Psoas muscle (tissue), 8 donors: ENCODE measurements at regions of chr3 and their contacts with region 1.

Region 1: GRCh38 chr3:9809615-9810432 is at the start of gene TTLL3:
- DNase-seq: peak; percentile 85 to 87
- ATAC-seq: peak; percentile 77 to 86 (median 84)
- H3K4me3 ChIP-seq: peak within 1 kb of the TSS; percentile 87
- H3K27ac ChIP-seq: peak within 1 kb of the TSS; percentile 92
- H3K4me1 ChIP-seq: peaks cover 19% of the 10 kb centered on the region
- H3K27me3 ChIP-seq: no peaks in the 10 kb centered on the region
- CTCF ChIP-seq: no peak
- total RNA-seq, gene TTLL3: 6.4 to 19.0 (median 7.7) TPM

Region 2: DNA sequence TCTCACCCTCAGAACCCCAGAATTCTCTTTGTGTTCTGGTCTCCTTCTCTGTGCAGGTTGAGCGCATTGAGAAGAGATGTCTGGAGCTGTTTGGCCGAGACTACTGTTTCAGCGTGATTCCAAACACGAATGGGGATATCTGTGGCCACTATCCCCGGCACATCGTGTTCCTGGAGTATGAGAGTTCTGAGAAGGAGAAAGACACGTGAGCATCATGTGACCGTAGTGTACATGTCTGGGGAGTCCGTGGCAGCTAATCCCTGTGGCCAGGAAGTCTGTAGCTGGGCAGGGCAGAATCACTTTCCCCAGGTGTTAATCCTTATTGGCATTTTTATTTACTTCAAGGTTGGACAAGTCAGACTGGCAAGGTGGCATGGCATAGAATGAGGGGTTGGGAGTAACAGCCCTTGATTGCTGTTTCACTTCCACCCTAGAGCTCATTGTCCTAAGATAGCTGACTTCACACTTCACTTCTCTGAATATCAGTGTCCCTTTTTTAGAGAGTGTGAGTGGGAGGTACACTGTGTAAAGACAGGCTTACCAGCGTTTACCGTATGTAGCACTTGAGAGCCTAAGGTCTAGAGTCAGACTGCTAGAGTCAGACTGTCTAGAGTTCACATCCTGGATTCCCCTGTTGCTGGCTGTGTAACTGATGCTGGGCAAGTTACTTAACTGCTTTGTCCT is 156.1 kb before region 1 on chr3:
- intact Hi-C with region 1: no loop called
- DNase-seq: peak in 1 of 2 donors; percentile 67
- ATAC-seq: peak; percentile 17 to 84 (median 72)
- H3K4me3 ChIP-seq: no peak overlapping the region
- H3K27ac ChIP-seq: peak overlapping the region; percentile 68
- H3K4me1 ChIP-seq: peaks cover 42% of the 10 kb centered on the region
- H3K27me3 ChIP-seq: no peaks in the 10 kb centered on the region
- CTCF ChIP-seq: no peak

Region 3: GRCh38 chr3:9843715-9844438 is 34.1 kb after region 1 on chr3 and contains the start of gene RPUSD3:
- intact Hi-C with region 1: loop called in 1 of 2 experiments (anchors 2 kb)
- DNase-seq: peak; percentile 98 to 99
- ATAC-seq: peak; percentile 99 to 100 (median 100)
- H3K4me3 ChIP-seq: peak within 1 kb of the TSS; percentile 93
- H3K27ac ChIP-seq: peak within 1 kb of the TSS; percentile 73
- H3K4me1 ChIP-seq: peaks cover 9% of the 10 kb centered on the region
- H3K27me3 ChIP-seq: no peaks in the 10 kb centered on the region
- CTCF ChIP-seq: no peak
- total RNA-seq, gene RPUSD3: 39.7 to 49.4 (median 45.8) TPM